ENCODE measurements at regions of chr2 and their contacts with region 1.

Region 1: GRCh38 chr2:202375609-202376408 is at the start of gene BMPR2:
- DNase-seq: peak; percentile 70 to 93 (median 83)
- H3K4me3 ChIP-seq: peak within 1 kb of the TSS; percentile 67 to 98 (median 89)
- H3K27ac ChIP-seq: peak within 1 kb of the TSS; percentile 36 to 98 (median 94)
- H3K27me3 ChIP-seq: no peaks in the 10 kb centered on the region
- CTCF ChIP-seq: peak in 12 of 56 donors; percentile 4 to 35 (median 16)
- total RNA-seq, gene BMPR2: 42.7 to 140 (median 102) TPM

Region 2: DNA sequence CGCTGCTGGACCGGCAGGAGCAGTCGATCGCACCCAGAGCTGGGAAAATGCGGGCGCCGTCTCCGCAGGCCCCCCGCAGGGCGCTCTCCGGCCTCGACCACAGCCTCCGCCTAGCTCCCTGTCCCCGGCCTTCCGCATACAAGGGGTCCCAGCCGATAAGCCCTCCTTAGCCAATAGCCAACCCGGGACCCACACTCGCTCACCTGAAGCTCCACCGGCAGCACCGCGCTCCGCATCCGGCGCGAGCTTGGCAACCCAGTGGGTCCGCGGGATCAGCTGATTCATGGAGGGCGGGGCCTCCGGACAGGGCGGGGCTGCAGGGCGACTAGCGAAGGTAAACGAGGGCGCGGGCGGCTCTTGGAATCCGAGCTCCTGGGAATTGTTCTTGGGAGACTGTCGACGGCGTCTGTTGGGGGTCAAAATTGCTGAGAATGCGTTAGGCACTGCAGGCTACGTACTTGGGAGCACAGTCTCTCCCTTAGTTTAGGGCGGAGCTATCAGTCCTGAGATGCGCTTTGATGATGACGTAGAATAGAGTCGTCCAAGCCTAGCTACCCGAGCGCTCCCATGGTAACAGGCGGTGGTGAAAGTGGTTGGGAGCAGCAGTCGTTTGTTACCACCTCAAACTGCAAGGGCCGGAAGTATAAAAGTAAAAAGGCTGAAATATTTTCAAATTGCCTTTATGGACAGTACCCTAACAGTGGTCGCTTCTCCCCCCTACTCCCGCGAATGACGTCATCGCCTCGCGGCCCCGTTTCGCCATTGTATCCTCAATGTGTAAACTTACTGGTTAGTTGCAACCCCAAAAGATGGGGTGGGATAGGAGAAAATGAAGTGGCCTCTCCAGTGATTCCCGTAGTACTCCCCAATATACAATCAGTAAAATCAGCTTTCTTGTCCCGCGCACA is 594.9 kb before region 1 on chr2 and contains the start of gene ALS2:
- intact Hi-C with region 1: loop called in 1 of 2 experiments (anchors 10 kb)
- DNase-seq: peak; percentile 88 to 98 (median 95)
- H3K4me3 ChIP-seq: peak within 1 kb of the TSS; percentile 62 to 100 (median 95)
- H3K27ac ChIP-seq: peak within 1 kb of the TSS; percentile 37 to 96 (median 84)
- H3K27me3 ChIP-seq: no peaks in the 10 kb centered on the region
- CTCF ChIP-seq: peak in 18 of 56 donors; percentile 5 to 47 (median 20)
- total RNA-seq, gene ALS2: 34.9 to 82.1 (median 57.1) TPM

Region 3: DNA sequence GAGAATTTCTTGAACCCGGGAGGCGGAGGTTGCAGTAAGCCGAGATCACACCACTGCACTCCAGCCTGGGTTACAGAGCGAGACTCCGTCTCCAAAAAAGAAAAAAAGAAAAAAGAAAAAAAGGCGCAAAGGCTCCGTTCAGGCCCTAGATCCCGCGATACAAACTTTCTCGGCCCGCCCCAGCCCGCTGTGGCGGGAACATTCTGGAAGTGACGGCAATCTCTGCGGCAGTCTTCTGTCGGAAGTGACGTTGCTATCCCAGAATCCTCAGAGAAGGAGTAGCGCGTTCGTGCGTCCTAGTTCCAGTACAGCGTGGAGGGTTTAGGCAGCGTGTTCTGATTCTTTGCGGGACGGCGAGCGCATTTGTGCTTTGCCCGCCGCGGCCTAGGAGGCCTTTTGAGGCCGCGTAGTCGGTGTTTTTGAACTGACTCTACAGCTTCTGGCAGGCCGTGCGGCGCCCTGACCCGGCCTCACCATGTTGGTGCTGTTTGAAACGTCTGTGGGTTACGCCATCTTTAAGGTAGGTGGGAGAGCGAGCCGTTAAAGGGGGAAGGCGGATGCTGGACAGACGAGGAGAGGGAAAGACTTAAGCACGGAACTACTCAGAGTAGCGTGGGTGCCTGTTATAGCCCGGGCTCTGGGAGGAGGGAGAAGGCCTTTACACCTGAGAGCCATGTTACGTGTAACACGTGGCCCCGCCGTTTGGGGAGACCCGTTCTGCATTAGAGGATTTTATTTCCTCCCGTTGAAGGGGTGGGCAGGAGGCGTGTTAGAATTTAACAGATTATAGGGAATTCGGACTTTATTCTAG is 110.1 kb before region 1 on chr2 and contains the start of gene NOP58:
- intact Hi-C with region 1: loop called (anchors 5 kb)
- DNase-seq: peak; percentile 76 to 94 (median 93)
- H3K4me3 ChIP-seq: peak within 1 kb of the TSS; percentile 67 to 100 (median 93)
- H3K27ac ChIP-seq: peak within 1 kb of the TSS; percentile 86 to 100 (median 98)
- H3K27me3 ChIP-seq: no peaks in the 10 kb centered on the region
- CTCF ChIP-seq: peak in 23 of 56 donors; percentile 4 to 47 (median 20)
- total RNA-seq, gene NOP58: 25.6 to 69.7 (median 45.3) TPM

Region 4: GRCh38 chr2:202494300-202495229 is 118.8 kb after region 1 on chr2:
- intact Hi-C with region 1: loop called in 1 of 2 experiments (anchors 5 kb)
- DNase-seq: peak in 8 of 10 donors; percentile 36 to 70 (median 52)
- H3K4me3 ChIP-seq: peak overlapping the region in 18 of 59 donors; percentile 0 to 33 (median 14)
- H3K27ac ChIP-seq: peak overlapping the region in 39 of 59 donors; percentile 1 to 71 (median 37)
- H3K27me3 ChIP-seq: no peaks in the 10 kb centered on the region
- CTCF ChIP-seq: no peak

Measured in dorsolateral prefrontal cortex (tissue), 120 donors.